Dendritic cell treated with granulocyte-macrophage colony-stimulating factor and Interleukin-4, amounts not matched to agents 40 ng/mL and 50 ng/mL, for 4 days (primary cell): ENCODE measurements at regions of chr6 and their contacts with region 1.

Region 1: GRCh38 chr6:29976588-29977424 is 34.5 kb downstream of the HLA-A start:
- H3K4me3 Mint-ChIP-seq: peak overlapping the region; percentile 89
- H3K27ac Mint-ChIP-seq: peak overlapping the region; percentile 73
- H3K4me1 Mint-ChIP-seq: peaks cover 48% of the 10 kb centered on the region
- H3K27me3 Mint-ChIP-seq: peaks cover 59% of the 10 kb centered on the region

Region 2: GRCh38 chr6:29887819-29888776 is 88.7 kb before region 1 on chr6:
- intact Hi-C with region 1: loop called (anchors 5 kb)
- H3K4me3 Mint-ChIP-seq: peak overlapping the region; percentile 74
- H3K27ac Mint-ChIP-seq: peak overlapping the region; percentile 89
- H3K4me1 Mint-ChIP-seq: peaks cover 16% of the 10 kb centered on the region
- H3K27me3 Mint-ChIP-seq: peaks cover 17% of the 10 kb centered on the region

Region 3: DNA sequence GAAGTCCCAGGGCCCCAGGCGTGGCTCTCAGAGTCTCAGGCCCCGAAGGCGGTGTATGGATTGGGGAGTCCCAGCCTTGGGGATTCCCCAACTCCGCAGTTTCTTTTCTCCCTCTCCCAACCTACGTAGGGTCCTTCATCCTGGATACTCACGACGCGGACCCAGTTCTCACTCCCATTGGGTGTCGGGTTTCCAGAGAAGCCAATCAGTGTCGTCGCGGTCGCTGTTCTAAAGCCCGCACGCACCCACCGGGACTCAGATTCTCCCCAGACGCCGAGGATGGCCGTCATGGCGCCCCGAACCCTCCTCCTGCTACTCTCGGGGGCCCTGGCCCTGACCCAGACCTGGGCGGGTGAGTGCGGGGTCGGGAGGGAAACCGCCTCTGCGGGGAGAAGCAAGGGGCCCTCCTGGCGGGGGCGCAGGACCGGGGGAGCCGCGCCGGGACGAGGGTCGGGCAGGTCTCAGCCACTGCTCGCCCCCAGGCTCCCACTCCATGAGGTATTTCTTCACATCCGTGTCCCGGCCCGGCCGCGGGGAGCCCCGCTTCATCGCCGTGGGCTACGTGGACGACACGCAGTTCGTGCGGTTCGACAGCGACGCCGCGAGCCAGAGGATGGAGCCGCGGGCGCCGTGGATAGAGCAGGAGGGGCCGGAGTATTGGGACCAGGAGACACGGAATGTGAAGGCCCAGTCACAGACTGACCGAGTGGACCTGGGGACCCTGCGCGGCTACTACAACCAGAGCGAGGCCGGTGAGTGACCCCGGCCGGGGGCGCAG is 34.3 kb before region 1 on chr6 and contains the start of gene HLA-A:
- intact Hi-C with region 1: loop called (anchors 5 kb)
- H3K4me3 Mint-ChIP-seq: peak within 1 kb of the TSS; percentile 94
- H3K27ac Mint-ChIP-seq: peak within 1 kb of the TSS; percentile 96
- H3K4me1 Mint-ChIP-seq: peaks cover 59% of the 10 kb centered on the region
- H3K27me3 Mint-ChIP-seq: no peaks in the 10 kb centered on the region

Region 4: GRCh38 chr6:30013291-30013922 is 36.6 kb after region 1 on chr6:
- intact Hi-C with region 1: loop called (anchors 5 kb)
- H3K4me3 Mint-ChIP-seq: no peak overlapping the region
- H3K27ac Mint-ChIP-seq: no peak overlapping the region
- H3K4me1 Mint-ChIP-seq: no peaks in the 10 kb centered on the region
- H3K27me3 Mint-ChIP-seq: peaks cover 11% of the 10 kb centered on the region

Region 5: GRCh38 chr6:30075161-30075986 is 98.6 kb after region 1 on chr6 and contains the start of gene RNF39:
- intact Hi-C with region 1: no loop called
- H3K4me3 Mint-ChIP-seq: no peak within 1 kb of the TSS
- H3K27ac Mint-ChIP-seq: no peak within 1 kb of the TSS
- H3K4me1 Mint-ChIP-seq: peaks cover 31% of the 10 kb centered on the region
- H3K27me3 Mint-ChIP-seq: peaks cover 94% of the 10 kb centered on the region